ENCODE measurements at regions of chr1 and their contacts with region 1.

Region 1: GRCh38 chr1:8211589-8212442 is 106.1 kb upstream of the SLC45A1 start:
- DNase-seq: no peak

Region 2: GRCh38 chr1:7127327-7128050 is 1084.3 kb before region 1 on chr1:
- intact Hi-C with region 1: no loop called
- DNase-seq: no peak

Region 3: GRCh38 chr1:8137481-8138244 is 74.2 kb before region 1 on chr1:
- intact Hi-C with region 1: loop called in 1 of 2 experiments (anchors 10 kb)
- DNase-seq: no peak

Region 4: GRCh38 chr1:8169364-8170058 is 42.3 kb before region 1 on chr1:
- intact Hi-C with region 1: no loop called
- DNase-seq: peak; percentile 62

Measured in posterior vena cava (tissue), 2 donors.